ENCODE measurements at regions of chr12 and their contacts with region 1.

Region 1: GRCh38 chr12:54251667-54252284 is 28.1 kb downstream of the CBX5 start:
- DNase-seq: peak in 7 of 35 experiments; percentile 4 to 70 (median 17)
- ATAC-seq: peak; percentile 55 to 70 (median 60)
- H3K4me3 ChIP-seq: no peak overlapping the region
- H3K4me3 Mint-ChIP-seq: no peak overlapping the region
- H3K27ac ChIP-seq: no peak overlapping the region
- H3K27ac Mint-ChIP-seq: no peak overlapping the region
- H3K4me1 ChIP-seq: peaks cover 0 to 5% of the 10 kb centered on the region in 2 experiments
- H3K4me1 Mint-ChIP-seq: peaks cover 5 to 10% (median 7%) of the 10 kb centered on the region in 3 donors
- H3K27me3 ChIP-seq: no peaks in the 10 kb centered on the region
- H3K27me3 Mint-ChIP-seq: no peaks in the 10 kb centered on the region

Region 2: GRCh38 chr12:54294152-54294952 is 42.6 kb after region 1 on chr12:
- CTCF ChIA-PET with region 1: interaction called, 3 to 4 read pairs
- POLR2A ChIA-PET with region 1: interaction called, 5 to 11 read pairs
- DNase-seq: peak in 28 of 35 experiments; percentile 10 to 66 (median 34)
- ATAC-seq: peak; percentile 39 to 75 (median 62)
- H3K4me3 ChIP-seq: no peak overlapping the region
- H3K4me3 Mint-ChIP-seq: no peak overlapping the region
- H3K27ac ChIP-seq: no peak overlapping the region
- H3K27ac Mint-ChIP-seq: no peak overlapping the region
- H3K4me1 ChIP-seq: peaks cover 0 to 5% of the 10 kb centered on the region in 2 experiments
- H3K4me1 Mint-ChIP-seq: peaks cover 5% of the 10 kb centered on the region in 3 donors
- H3K27me3 ChIP-seq: peaks cover 0 to 11% of the 10 kb centered on the region in 2 experiments
- H3K27me3 Mint-ChIP-seq: peaks cover 6% of the 10 kb centered on the region in 2 donors

Region 3: DNA sequence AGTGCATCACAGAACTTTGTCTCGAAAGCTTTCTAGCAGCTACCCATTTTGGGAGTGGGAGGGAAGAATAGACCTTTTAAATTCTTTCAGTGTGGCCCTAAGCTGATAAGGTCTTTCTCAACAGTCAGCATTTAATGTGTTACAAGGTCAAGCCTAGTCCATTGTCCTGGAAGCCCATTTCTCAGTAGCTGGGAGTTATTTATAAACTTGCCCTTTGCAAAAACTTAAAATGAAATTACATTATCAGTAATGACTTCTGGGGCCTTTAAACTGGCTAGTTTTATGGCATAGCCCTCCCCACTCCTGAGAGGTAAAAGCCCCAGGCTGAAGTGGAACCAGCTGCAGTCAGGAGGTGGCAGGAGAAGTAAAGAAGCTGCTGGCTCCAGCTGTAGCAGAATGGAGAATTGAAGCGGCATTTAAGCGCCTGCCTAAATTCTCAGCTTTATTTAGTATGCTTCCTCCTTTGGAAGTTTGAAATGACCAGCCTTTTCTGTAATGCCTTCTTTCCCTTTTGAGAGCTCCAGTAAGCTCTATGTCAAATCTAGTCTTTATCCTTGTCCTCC is 85.6 kb after region 1 on chr12:
- CTCF ChIA-PET with region 1: interaction called, 11 to 14 read pairs
- POLR2A ChIA-PET with region 1: no interaction called
- DNase-seq: no peak
- ATAC-seq: no peak
- H3K4me3 ChIP-seq: no peak overlapping the region
- H3K4me3 Mint-ChIP-seq: no peak overlapping the region
- H3K27ac ChIP-seq: no peak overlapping the region
- H3K27ac Mint-ChIP-seq: peak overlapping the region in 1 of 2 donors; percentile 34
- H3K4me1 ChIP-seq: peaks cover 3 to 4% of the 10 kb centered on the region in 2 experiments
- H3K4me1 Mint-ChIP-seq: peaks cover 28 to 38% (median 32%) of the 10 kb centered on the region in 3 donors
- H3K27me3 ChIP-seq: no peaks in the 10 kb centered on the region
- H3K27me3 Mint-ChIP-seq: no peaks in the 10 kb centered on the region

Region 4: GRCh38 chr12:54359033-54359761 is 107.4 kb after region 1 on chr12:
- CTCF ChIA-PET with region 1: interaction called in 1 of 2 experiments, 21 read pairs
- POLR2A ChIA-PET with region 1: no interaction called
- DNase-seq: peak; percentile 77 to 98 (median 94)
- ATAC-seq: peak; percentile 95 to 96 (median 95)
- H3K4me3 ChIP-seq: peak overlapping the region; percentile 83 to 84
- H3K4me3 Mint-ChIP-seq: no peak overlapping the region
- H3K27ac ChIP-seq: peak overlapping the region; percentile 77
- H3K27ac Mint-ChIP-seq: no peak overlapping the region
- H3K4me1 ChIP-seq: peaks cover 16 to 30% of the 10 kb centered on the region in 2 experiments
- H3K4me1 Mint-ChIP-seq: peaks cover 10 to 21% (median 14%) of the 10 kb centered on the region in 3 donors
- H3K27me3 ChIP-seq: peaks cover 0 to 3% of the 10 kb centered on the region in 2 experiments
- H3K27me3 Mint-ChIP-seq: no peaks in the 10 kb centered on the region

Region 5: DNA sequence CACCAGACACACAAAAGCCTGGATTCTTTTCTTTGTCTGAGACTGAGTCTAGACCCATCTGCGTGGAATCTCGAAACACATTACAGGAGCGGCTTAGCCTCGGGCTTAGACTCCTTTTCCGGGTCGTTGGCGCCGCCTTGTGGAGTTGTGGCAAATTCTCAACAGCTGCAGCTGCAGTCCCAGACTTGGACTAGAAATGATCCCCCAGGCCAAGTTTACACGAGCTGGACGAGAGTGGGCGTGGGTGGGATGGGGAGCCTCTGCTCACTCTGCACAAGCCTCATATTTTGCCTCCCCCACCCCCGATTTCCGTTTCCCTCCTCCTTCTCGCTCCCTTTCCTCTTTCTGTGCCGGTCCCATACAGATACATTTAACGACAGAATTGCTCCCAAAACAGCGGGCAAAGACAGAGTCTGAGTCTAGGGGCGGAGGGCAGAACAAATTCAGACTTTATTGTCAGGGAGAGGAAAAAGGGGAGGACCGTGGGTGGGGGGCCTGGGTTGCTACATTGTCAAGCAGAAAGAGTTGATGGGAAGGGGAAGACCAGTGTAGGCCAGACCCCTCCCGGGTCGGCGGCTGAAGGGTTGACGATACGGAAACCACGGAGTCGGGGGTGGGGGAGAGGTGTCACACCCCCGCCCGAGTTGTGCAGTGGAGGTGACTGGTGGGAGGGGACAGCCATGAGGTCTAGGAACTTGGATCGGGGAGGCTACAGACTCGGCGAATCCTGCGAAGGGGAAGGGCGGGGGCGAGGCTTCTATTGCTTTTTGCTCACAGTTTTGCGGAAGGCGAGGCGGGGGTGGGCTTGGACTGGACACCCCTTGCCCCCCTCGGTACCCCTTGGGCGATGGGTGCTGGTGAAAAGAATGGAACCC is 117.2 kb after region 1 on chr12:
- CTCF ChIA-PET with region 1: interaction called, 3 to 29 read pairs
- POLR2A ChIA-PET with region 1: no interaction called
- DNase-seq: peak; percentile 70 to 93 (median 87)
- ATAC-seq: peak; percentile 88 to 92 (median 91)
- H3K4me3 ChIP-seq: peak overlapping the region; percentile 26 to 29
- H3K4me3 Mint-ChIP-seq: peak overlapping the region; percentile 59 to 71 (median 68)
- H3K27ac ChIP-seq: no peak overlapping the region
- H3K27ac Mint-ChIP-seq: peak overlapping the region in 1 of 2 donors; percentile 57
- H3K4me1 ChIP-seq: peaks cover 15 to 34% of the 10 kb centered on the region in 2 experiments
- H3K4me1 Mint-ChIP-seq: peaks cover 32 to 46% (median 43%) of the 10 kb centered on the region in 3 donors
- H3K27me3 ChIP-seq: peaks cover 0 to 2% of the 10 kb centered on the region in 2 experiments
- H3K27me3 Mint-ChIP-seq: no peaks in the 10 kb centered on the region

Region 6: GRCh38 chr12:54379401-54380201 is 127.8 kb after region 1 on chr12:
- CTCF ChIA-PET with region 1: interaction called, 9 to 18 read pairs
- POLR2A ChIA-PET with region 1: no interaction called
- DNase-seq: peak; percentile 73 to 92 (median 85)
- ATAC-seq: peak; percentile 94 to 98 (median 96)
- H3K4me3 ChIP-seq: peak overlapping the region in 1 of 2 donors; percentile 25
- H3K4me3 Mint-ChIP-seq: peak overlapping the region; percentile 1 to 72 (median 64)
- H3K27ac ChIP-seq: no peak overlapping the region
- H3K27ac Mint-ChIP-seq: peak overlapping the region in 1 of 2 donors; percentile 9
- H3K4me1 ChIP-seq: peaks cover 0 to 8% of the 10 kb centered on the region in 2 experiments
- H3K4me1 Mint-ChIP-seq: peaks cover 8 to 15% (median 10%) of the 10 kb centered on the region in 3 donors
- H3K27me3 ChIP-seq: no peaks in the 10 kb centered on the region
- H3K27me3 Mint-ChIP-seq: no peaks in the 10 kb centered on the region

Region 7: GRCh38 chr12:54463034-54463433 is 211.3 kb after region 1 on chr12:
- CTCF ChIA-PET with region 1: no interaction called
- POLR2A ChIA-PET with region 1: no interaction called
- DNase-seq: no peak
- ATAC-seq: no peak
- H3K4me3 ChIP-seq: no peak overlapping the region
- H3K4me3 Mint-ChIP-seq: no peak overlapping the region
- H3K27ac ChIP-seq: no peak overlapping the region
- H3K27ac Mint-ChIP-seq: no peak overlapping the region
- H3K4me1 ChIP-seq: no peaks in the 10 kb centered on the region
- H3K4me1 Mint-ChIP-seq: no peaks in the 10 kb centered on the region
- H3K27me3 ChIP-seq: peaks cover 0 to 3% of the 10 kb centered on the region in 2 experiments
- H3K27me3 Mint-ChIP-seq: peaks cover 19 to 20% of the 10 kb centered on the region in 2 donors

Region 8: DNA sequence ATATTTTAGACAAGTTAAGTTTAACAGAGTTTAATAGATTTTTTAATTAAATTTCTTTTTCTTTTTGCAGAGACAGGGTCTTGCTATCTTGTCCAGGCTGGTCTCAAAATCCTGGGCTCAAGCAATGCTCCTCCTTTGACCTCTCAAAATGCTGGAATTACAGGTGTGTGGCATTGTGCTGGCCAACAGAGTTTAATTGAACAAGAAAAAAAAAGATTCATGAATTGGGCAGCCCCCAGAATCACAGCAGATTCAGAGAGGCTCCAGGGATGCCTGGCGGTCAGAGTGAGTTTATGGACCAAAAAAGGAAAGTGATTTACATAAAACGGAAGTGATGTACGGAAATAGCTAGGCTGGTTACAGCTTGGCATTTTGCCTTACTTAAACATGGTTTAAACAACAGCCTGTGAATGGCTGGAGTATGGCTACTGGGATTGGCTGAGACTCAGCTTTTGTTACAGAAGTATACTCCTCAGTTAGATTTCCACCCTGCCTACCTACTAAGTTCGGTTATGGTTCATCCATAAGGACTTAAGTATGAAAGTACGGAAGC is 747.3 kb after region 1 on chr12:
- CTCF ChIA-PET with region 1: no interaction called
- POLR2A ChIA-PET with region 1: no interaction called
- DNase-seq: no peak
- ATAC-seq: no peak
- H3K4me3 ChIP-seq: no peak overlapping the region
- H3K4me3 Mint-ChIP-seq: no peak overlapping the region
- H3K27ac ChIP-seq: no peak overlapping the region
- H3K27ac Mint-ChIP-seq: peak overlapping the region in 1 of 2 donors; percentile 25
- H3K4me1 ChIP-seq: peaks cover 5% of the 10 kb centered on the region in 2 experiments
- H3K4me1 Mint-ChIP-seq: peaks cover 14 to 24% (median 17%) of the 10 kb centered on the region in 3 donors
- H3K27me3 ChIP-seq: no peaks in the 10 kb centered on the region
- H3K27me3 Mint-ChIP-seq: no peaks in the 10 kb centered on the region

Measured in T-cell (primary cell).